Cardiac septum (tissue), 1 donor: ENCODE measurements at regions of chr2 and their contacts with region 1.

Region 1: DNA sequence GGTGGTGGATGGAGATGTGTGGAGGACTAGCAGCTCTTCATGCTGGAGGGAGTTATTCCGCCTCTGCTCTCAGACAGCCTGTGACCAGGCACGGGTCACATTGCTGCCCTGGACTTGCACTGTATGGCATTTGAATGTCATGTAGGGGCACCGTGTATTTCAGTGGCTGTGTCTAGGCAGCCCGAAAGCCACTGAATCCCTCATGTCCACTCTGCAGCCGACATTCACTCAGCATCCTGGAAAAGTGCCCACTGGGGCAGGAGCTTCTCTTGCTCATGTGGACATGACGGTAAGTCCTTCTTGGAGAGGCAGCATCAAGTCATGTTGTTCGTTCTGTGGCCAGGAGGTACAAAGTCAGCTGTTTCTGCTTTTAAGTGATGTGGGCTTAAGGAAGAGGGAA is 127.9 kb downstream of the SH3RF3 start:
- DNase-seq: no peak

Region 2: DNA sequence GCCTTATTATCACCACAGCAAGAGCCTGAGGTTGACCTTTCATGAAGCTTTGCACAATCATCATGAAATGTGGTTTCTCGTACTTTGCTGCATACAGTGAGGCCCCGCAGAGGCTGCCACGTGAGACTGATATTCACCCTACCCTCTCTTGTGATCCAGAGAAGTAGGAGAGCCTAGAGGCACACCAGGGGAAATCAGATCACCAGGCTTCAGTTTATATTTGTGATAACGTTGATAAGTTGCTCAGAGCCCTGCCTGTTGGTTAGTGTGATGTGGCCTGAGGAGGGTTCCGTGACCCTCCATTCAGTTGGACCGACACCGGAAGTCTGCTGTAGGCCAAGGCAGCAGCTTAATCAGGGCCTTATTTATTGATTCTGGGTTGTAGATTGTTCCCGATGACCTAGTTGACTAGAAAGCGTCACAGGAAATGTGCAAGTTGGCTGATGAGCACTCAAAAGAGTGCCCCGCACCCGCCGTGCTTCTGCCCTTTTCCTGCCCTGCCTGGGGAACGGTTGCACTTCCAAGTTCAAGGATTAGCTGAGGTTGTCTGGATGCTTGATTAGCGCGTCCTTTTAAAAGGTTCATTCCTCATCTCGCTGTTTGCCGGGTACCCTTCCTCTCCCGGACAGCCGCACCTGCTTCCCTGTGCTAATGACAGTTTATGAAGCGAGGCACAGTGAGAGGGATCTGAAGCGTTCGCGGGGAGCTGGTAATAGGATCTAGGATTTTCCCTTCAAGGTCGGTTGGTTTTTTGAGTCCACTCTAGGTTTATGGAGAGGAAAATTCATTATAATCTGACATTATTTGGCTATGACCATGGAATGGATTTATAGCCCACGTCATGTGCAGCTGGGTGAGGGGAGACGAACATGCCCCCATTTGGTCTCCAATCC is 18.4 kb after region 1 on chr2:
- intact Hi-C with region 1: no loop called
- DNase-seq: no peak

Region 3: DNA sequence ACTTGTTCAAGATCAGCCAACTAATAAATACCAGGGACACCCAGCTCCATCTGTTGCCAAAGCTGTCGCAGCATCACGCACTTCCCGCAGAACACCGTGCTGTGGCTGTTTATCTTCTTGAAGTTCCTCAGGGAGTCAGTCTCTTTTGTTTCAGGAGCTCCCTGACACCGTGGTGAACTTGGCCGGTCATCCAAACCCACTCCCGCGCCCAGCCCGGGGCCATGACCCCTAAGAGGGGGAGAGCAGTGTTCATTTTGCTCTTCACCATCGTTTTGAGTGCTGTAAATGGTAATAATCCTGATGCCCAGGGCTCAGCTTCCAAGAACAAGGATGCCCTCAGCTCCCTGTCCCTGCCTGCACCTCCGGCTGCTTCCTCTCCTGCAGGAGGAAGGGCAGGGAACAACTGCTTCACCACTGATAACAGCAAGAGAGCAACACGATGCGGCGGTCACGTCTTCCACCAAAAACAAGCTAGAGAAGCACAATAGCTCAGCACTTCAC is 225.5 kb after region 1 on chr2:
- intact Hi-C with region 1: loop called (anchors 5 kb)
- DNase-seq: no peak